CD14-positive monocyte (primary cell): ENCODE measurements at regions of chr19 and their contacts with region 1.

Region 1: DNA sequence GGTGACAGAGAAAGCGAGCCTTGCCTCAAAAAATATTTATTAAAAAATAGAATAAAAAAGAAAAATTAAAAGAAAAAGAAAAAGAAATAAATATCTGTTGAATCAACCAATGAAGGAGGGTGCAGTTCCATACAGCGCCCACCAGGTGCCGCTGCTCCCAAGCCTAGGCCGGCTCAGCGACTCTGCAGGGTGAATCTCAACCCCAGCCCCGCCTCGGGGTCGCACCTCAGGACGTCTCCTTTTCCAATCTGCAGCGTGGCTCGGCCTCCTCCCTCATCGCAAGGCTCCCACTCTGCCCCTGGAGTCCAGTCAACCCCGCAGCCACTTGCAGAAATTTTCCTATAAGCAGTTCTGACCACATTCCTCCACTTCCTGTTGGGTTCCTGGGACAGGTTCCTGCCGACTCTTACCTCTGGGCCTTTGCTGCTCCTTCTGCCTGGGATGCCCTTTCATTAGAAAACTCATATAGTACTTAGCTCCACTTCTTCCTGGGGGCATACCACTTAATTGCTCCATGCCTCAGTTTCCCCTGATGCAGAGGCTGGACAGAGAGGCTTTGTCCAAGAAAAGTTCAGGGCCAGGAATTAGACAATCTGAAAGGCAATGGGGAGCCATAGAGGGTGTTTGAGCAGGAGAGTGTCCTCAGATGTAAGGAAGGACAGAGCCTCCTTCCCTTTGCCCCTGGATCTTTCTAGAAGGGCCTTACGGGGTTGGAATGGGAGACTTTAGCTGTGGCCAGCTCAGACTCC is 24.3 kb downstream of the NFILZ start:
- DNase-seq: peak in 2 of 3 donors; percentile 47 to 53
- H3K4me3 ChIP-seq: peak overlapping the region; percentile 10 to 70 (median 28)
- H3K4me3 Mint-ChIP-seq: peak overlapping the region; percentile 70 to 88
- H3K27ac ChIP-seq: no peak overlapping the region
- H3K27ac Mint-ChIP-seq: peak overlapping the region in 1 of 7 donors; percentile 18
- H3K4me1 ChIP-seq: peaks cover 25 to 40% of the 10 kb centered on the region in 2 donors
- H3K4me1 Mint-ChIP-seq: peaks cover 34% of the 10 kb centered on the region
- H3K27me3 ChIP-seq: no peaks in the 10 kb centered on the region
- H3K27me3 Mint-ChIP-seq: peaks cover 5 to 17% (median 10%) of the 10 kb centered on the region in 3 donors
- CTCF ChIP-seq: peak; percentile 99

Region 2: DNA sequence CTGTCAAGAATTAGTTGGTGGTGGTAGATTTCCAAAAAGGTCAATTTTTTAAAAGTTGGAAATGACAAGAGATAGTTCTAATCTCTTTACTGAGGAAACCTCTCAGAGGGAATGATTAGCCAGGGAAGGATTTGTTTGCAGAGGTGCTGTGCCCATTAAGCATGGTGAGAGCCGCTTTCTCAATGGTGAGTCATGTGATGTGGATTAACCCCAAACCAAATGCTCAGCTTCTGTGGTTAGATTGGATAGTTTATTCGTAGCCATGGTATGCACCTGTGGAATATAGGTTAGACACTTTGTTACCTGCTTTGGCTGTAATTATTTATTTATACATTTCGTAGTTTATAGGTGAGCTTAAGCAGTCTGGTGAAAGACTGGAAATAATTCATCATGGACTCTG is 202.9 kb before region 1 on chr19:
- intact Hi-C with region 1: no loop called
- DNase-seq: no peak
- H3K4me3 ChIP-seq: no peak overlapping the region
- H3K4me3 Mint-ChIP-seq: no peak overlapping the region
- H3K27ac ChIP-seq: peak overlapping the region in 1 of 2 donors; percentile 30
- H3K27ac Mint-ChIP-seq: peak overlapping the region in 3 of 7 donors; percentile 46 to 78 (median 71)
- H3K4me1 ChIP-seq: peaks cover under 1 to 5% of the 10 kb centered on the region in 2 donors
- H3K4me1 Mint-ChIP-seq: peaks cover 52% of the 10 kb centered on the region
- H3K27me3 ChIP-seq: no peaks in the 10 kb centered on the region
- H3K27me3 Mint-ChIP-seq: peaks cover 0 to 1% (median 0%) of the 10 kb centered on the region in 3 donors
- CTCF ChIP-seq: no peak

Region 3: DNA sequence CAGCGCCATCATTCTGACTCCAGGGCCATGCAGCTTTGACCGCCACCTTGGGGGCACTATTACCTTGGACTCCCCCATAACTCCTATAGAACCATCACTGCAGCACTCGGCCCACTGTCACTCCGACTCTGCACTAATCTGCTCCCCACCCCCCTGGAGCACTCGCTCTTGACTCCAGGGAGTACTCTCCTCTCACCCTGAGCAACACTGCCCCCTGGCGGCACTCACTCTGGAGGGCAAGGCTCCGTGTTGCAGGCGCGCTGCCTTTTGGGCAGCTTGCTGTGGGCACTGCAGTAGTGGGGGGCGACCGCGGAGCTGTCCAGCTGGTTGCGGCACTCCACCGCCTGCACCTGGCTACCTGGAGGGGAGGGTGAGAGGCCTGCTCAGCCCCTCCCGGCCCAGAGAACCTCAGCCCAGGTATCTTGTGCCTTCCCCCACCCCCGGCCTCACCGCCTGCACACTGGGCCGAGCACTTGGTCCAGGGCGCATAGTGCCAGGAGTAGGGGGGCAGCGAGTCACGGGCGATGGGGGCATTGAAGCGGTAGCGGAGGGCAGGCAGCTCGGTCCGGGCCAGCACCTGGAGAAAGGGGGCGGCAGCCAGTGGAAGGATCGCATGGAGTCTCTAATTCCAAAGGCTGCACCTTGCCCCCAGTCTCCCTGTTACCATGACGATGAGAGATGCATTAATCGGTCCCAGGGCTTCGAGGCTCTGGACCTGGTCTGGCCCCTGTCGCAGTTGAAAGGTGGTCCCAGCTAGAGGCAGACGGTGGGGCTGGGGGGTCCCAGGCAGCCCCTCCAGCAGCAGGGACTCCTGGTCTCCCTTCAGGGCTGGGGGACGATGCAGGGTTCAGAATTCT is 68.6 kb before region 1 on chr19:
- intact Hi-C with region 1: no loop called
- DNase-seq: peak in 1 of 3 donors; percentile 45
- H3K4me3 ChIP-seq: no peak overlapping the region
- H3K4me3 Mint-ChIP-seq: no peak overlapping the region
- H3K27ac ChIP-seq: no peak overlapping the region
- H3K27ac Mint-ChIP-seq: no peak overlapping the region
- H3K4me1 ChIP-seq: peaks cover 0 to under 1% of the 10 kb centered on the region in 2 donors
- H3K4me1 Mint-ChIP-seq: no peaks in the 10 kb centered on the region
- H3K27me3 ChIP-seq: peaks cover 0 to 3% of the 10 kb centered on the region in 2 donors
- H3K27me3 Mint-ChIP-seq: peaks cover 9 to 11% (median 11%) of the 10 kb centered on the region in 3 donors
- CTCF ChIP-seq: peak; percentile 68

Region 4: DNA sequence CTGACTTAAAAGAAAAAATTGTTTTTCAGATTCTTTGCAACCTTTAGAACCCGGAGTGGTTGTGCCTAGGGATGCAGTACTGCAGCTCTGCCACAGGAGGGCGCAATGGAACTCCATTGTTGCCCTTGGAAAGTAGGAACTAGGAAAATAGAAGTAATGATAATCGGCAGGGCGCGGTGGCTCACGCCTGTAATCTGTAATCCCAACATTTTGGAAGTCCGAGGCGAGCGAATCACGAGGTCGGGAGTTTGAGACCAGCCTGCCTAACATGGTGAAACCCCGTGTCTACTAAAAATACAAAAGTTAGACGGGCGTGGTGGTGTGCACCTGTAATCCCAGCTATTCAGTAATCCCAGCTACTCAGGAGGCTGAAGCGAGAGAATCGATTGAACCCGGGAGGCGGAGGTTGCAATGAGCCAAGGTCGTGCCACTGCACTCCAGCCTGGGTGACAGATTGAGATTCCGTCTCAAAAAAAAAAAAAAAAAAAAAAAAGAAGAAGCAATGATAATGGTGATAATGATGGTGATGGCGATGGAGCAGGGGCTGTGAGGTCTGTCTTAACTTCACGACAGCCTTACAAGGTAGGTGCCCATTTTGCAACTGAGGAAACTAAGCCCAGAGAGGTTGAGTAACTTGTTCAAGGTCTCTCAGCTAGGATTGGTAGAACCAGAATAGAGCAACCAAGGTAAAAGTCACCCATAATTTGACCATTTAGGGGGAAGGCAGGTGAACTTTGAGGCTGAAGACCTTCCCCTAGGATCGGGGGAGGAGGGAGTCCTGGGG is 38.8 kb before region 1 on chr19:
- intact Hi-C with region 1: loop called (anchors 5 kb)
- DNase-seq: peak; percentile 73 to 84 (median 76)
- H3K4me3 ChIP-seq: peak overlapping the region in 1 of 3 experiments; percentile 21
- H3K4me3 Mint-ChIP-seq: peak overlapping the region; percentile 59 to 73
- H3K27ac ChIP-seq: no peak overlapping the region
- H3K27ac Mint-ChIP-seq: no peak overlapping the region
- H3K4me1 ChIP-seq: peaks cover 6 to 7% of the 10 kb centered on the region in 2 donors
- H3K4me1 Mint-ChIP-seq: peaks cover 9% of the 10 kb centered on the region
- H3K27me3 ChIP-seq: peaks cover 0 to 11% of the 10 kb centered on the region in 2 donors
- H3K27me3 Mint-ChIP-seq: peaks cover 10 to 35% (median 24%) of the 10 kb centered on the region in 3 donors
- CTCF ChIP-seq: peak; percentile 95

Region 5: DNA sequence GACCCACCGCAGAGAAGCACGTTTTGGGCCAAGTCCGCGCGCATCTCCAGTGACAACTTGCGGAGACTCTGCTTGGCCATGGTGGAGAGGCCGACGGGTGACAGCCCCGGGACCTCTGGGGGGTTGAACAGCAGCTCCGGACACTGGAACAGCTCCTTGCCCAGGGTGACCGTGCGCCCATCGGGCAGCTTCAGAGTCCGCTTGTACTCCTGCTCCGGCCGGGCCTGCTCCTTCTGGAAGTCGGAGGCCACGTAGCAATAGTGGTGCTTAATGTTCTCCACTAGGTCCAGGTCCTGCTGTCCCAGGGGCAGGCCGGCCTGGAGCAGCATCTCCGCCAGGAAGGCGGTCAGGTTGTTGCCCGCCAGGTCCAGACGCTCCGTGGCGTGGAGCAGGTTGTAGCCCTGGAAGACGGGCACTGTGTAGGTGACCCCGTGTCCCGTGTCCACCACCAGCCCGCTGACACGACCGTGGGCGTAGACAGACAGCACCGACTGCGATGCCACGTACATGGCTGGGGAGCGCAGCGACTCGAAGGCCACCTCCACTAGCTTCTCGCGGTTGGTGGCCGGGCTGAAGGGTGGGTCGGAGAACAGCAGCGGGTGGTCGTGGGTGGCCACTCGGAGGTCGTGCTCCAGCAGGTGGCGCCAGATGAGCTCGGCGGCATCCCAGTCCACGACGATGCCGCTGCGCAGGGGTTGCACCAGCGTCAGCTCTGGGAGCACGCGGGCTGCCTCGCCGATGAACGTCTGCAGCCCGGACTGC is 43.1 kb after region 1 on chr19:
- intact Hi-C with region 1: loop called (anchors 1 to 2 kb)
- DNase-seq: no peak
- H3K4me3 ChIP-seq: no peak overlapping the region
- H3K4me3 Mint-ChIP-seq: no peak overlapping the region
- H3K27ac ChIP-seq: no peak overlapping the region
- H3K27ac Mint-ChIP-seq: no peak overlapping the region
- H3K4me1 ChIP-seq: peaks cover 15 to 23% of the 10 kb centered on the region in 2 donors
- H3K4me1 Mint-ChIP-seq: peaks cover 25% of the 10 kb centered on the region
- H3K27me3 ChIP-seq: no peaks in the 10 kb centered on the region
- H3K27me3 Mint-ChIP-seq: peaks cover 18 to 54% (median 25%) of the 10 kb centered on the region in 3 donors
- CTCF ChIP-seq: peak; percentile 16